ENCODE measurements at regions of chr1 and their contacts with region 1.

Region 1: GRCh38 chr1:84143796-84144565 is at the start of gene PRKACB:
- DNase-seq: no peak
- ATAC-seq: peak; percentile 48 to 90 (median 82)
- H3K4me3 ChIP-seq: peak within 1 kb of the TSS in 1 of 4 donors; percentile 25
- H3K27ac ChIP-seq: peak within 1 kb of the TSS in 3 of 4 donors; percentile 9 to 75 (median 74)
- H3K4me1 ChIP-seq: peaks cover 5 to 35% (median 10%) of the 10 kb centered on the region in 3 donors
- H3K27me3 ChIP-seq: no peaks in the 10 kb centered on the region
- CTCF ChIP-seq: no peak
- total RNA-seq, gene PRKACB: 8.0 to 29.7 (median 14.0) TPM

Region 2: GRCh38 chr1:84742653-84743052 is 598.7 kb after region 1 on chr1:
- intact Hi-C with region 1: loop called in 1 of 3 experiments (anchors 10 kb)
- DNase-seq: no peak
- ATAC-seq: no peak
- H3K4me3 ChIP-seq: no peak overlapping the region
- H3K27ac ChIP-seq: no peak overlapping the region
- H3K4me1 ChIP-seq: no peaks in the 10 kb centered on the region
- H3K27me3 ChIP-seq: no peaks in the 10 kb centered on the region
- CTCF ChIP-seq: no peak